Naive thymus-derived CD4-positive, alpha-beta T cell (primary cell): ENCODE measurements at regions of chr4 and their contacts with region 1.

Region 1: GRCh38 chr4:183261953-183262775 is 57.9 kb downstream of the CLDN22 start:
- DNase-seq: peak; percentile 41 to 72 (median 66)
- ATAC-seq: peak; percentile 95
- H3K4me3 ChIP-seq: no peak overlapping the region
- H3K4me3 Mint-ChIP-seq: no peak overlapping the region
- H3K27ac ChIP-seq: no peak overlapping the region
- H3K27ac Mint-ChIP-seq: peak overlapping the region in 8 of 9 donors; percentile 15 to 87 (median 78)
- H3K4me1 ChIP-seq: peaks cover 0 to 5% of the 10 kb centered on the region in 2 donors
- H3K4me1 Mint-ChIP-seq: peaks cover 3 to 12% (median 8%) of the 10 kb centered on the region in 7 donors
- H3K27me3 ChIP-seq: no peaks in the 10 kb centered on the region
- H3K27me3 Mint-ChIP-seq: peaks cover 0 to 4% (median 0%) of the 10 kb centered on the region in 5 donors

Region 2: DNA sequence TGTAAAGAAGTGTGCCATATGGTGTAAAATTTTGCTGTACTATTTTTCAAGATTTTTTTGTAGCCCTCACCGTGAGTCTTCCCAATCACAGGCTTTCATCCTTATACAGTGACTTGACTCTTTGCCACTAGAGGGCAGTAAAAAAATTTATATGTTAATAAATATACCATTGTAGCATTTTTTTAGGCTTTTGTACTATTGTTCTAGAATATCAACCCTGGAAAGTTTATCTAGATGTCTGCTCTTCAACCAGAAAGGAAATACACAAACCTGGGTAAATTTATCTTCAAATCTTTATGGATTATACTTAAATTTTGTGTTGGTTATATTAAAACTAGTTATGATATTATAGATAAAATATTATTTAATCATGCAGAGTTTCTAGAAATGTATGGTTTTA is 783.7 kb before region 1 on chr4:
- CTCF ChIA-PET with region 1: no interaction called
- POLR2A ChIA-PET with region 1: no interaction called
- intact Hi-C with region 1: loop called (anchors 1 kb)
- DNase-seq: peak in 6 of 9 donors; percentile 1 to 36 (median 22)
- ATAC-seq: peak; percentile 61
- H3K4me3 ChIP-seq: no peak overlapping the region
- H3K4me3 Mint-ChIP-seq: no peak overlapping the region
- H3K27ac ChIP-seq: no peak overlapping the region
- H3K27ac Mint-ChIP-seq: no peak overlapping the region
- H3K4me1 ChIP-seq: no peaks in the 10 kb centered on the region
- H3K4me1 Mint-ChIP-seq: no peaks in the 10 kb centered on the region
- H3K27me3 ChIP-seq: no peaks in the 10 kb centered on the region
- H3K27me3 Mint-ChIP-seq: peaks cover 0 to 16% (median 8%) of the 10 kb centered on the region in 5 donors

Region 3: DNA sequence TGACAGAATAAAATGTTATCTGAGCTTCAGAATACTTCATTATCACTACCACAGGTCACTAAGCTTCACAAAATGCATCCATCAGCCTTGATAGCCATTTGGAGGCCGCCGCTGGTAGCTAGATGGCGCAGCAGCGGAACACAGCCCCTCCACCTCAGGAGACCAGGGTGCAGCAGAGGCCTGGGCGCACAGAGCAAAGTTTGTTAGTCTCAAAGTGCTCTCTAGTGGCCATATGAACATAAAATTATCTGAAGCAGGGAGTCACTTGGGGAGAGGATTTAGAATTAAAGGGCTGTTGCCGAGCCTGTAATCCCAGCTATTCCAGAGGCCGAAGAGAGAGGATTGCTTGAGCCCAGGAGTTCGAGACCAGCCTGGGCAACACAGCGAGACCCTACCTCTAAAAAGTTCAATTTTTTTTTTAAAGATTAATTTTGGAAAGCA is 336.8 kb before region 1 on chr4:
- CTCF ChIA-PET with region 1: interaction called, 4 read pairs
- POLR2A ChIA-PET with region 1: no interaction called
- intact Hi-C with region 1: loop called in 1 of 2 experiments (anchors 1 kb)
- DNase-seq: peak; percentile 33 to 67 (median 52)
- ATAC-seq: peak; percentile 96
- H3K4me3 ChIP-seq: no peak overlapping the region
- H3K4me3 Mint-ChIP-seq: no peak overlapping the region
- H3K27ac ChIP-seq: no peak overlapping the region
- H3K27ac Mint-ChIP-seq: no peak overlapping the region
- H3K4me1 ChIP-seq: no peaks in the 10 kb centered on the region
- H3K4me1 Mint-ChIP-seq: peaks cover 0 to 8% (median 0%) of the 10 kb centered on the region in 7 donors
- H3K27me3 ChIP-seq: no peaks in the 10 kb centered on the region
- H3K27me3 Mint-ChIP-seq: peaks cover 0 to 36% (median 0%) of the 10 kb centered on the region in 5 donors

Region 4: DNA sequence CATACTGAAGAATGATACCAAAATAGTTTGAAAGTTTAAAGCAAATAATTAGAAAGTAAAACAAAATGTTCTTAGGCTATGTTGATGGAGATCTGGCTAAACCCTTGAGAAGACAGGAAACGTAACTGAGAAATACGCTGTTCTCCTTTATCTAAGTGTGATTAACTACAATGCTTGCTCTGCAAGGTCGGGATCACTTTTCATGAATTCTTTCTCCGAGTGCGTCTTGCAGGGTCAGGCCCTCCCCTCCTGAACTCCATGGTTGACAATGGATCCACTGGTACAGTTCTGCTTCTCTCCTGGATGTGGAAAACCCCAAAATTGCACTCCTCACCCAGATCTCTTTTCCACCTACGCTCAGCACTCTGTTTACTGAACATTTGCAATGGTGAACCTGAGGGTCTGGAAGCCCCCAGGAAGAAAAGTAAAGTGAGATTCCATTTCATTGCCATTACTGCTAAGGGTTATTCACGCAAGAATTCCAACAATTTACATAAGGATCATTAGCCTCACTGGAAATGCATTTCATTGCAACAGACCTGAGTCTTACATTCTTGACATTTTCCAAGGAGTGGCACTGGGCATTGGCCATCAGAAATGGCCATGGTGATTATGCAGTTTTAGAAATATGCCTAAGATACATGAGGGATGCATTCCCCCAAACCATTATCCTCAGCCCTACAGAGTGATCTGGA is 187.7 kb before region 1 on chr4:
- CTCF ChIA-PET with region 1: interaction called, 31 read pairs
- POLR2A ChIA-PET with region 1: no interaction called
- intact Hi-C with region 1: loop called (anchors 1 kb)
- DNase-seq: no peak
- ATAC-seq: no peak
- H3K4me3 ChIP-seq: no peak overlapping the region
- H3K4me3 Mint-ChIP-seq: no peak overlapping the region
- H3K27ac ChIP-seq: no peak overlapping the region
- H3K27ac Mint-ChIP-seq: peak overlapping the region in 1 of 9 donors; percentile 18
- H3K4me1 ChIP-seq: no peaks in the 10 kb centered on the region
- H3K4me1 Mint-ChIP-seq: no peaks in the 10 kb centered on the region
- H3K27me3 ChIP-seq: no peaks in the 10 kb centered on the region
- H3K27me3 Mint-ChIP-seq: peaks cover 0 to 16% (median 5%) of the 10 kb centered on the region in 5 donors

Region 5: GRCh38 chr4:183165376-183165775 is 96.8 kb before region 1 on chr4:
- CTCF ChIA-PET with region 1: no interaction called
- POLR2A ChIA-PET with region 1: no interaction called
- intact Hi-C with region 1: no loop called
- DNase-seq: no peak
- ATAC-seq: no peak
- H3K4me3 ChIP-seq: no peak overlapping the region
- H3K4me3 Mint-ChIP-seq: no peak overlapping the region
- H3K27ac ChIP-seq: no peak overlapping the region
- H3K27ac Mint-ChIP-seq: no peak overlapping the region
- H3K4me1 ChIP-seq: no peaks in the 10 kb centered on the region
- H3K4me1 Mint-ChIP-seq: peaks cover 0 to 28% (median 10%) of the 10 kb centered on the region in 7 donors
- H3K27me3 ChIP-seq: no peaks in the 10 kb centered on the region
- H3K27me3 Mint-ChIP-seq: peaks cover 0 to 4% (median 0%) of the 10 kb centered on the region in 5 donors

Region 6: GRCh38 chr4:183249857-183250256 is 12.3 kb before region 1 on chr4:
- CTCF ChIA-PET with region 1: interaction called, 24 read pairs
- POLR2A ChIA-PET with region 1: no interaction called
- intact Hi-C with region 1: no loop called
- DNase-seq: peak in 4 of 9 donors; percentile 3 to 19 (median 18)
- ATAC-seq: peak; percentile 47
- H3K4me3 ChIP-seq: no peak overlapping the region
- H3K4me3 Mint-ChIP-seq: no peak overlapping the region
- H3K27ac ChIP-seq: no peak overlapping the region
- H3K27ac Mint-ChIP-seq: no peak overlapping the region
- H3K4me1 ChIP-seq: no peaks in the 10 kb centered on the region
- H3K4me1 Mint-ChIP-seq: no peaks in the 10 kb centered on the region
- H3K27me3 ChIP-seq: no peaks in the 10 kb centered on the region
- H3K27me3 Mint-ChIP-seq: peaks cover 0 to 5% (median 0%) of the 10 kb centered on the region in 5 donors

Region 7: GRCh38 chr4:183407128-183407585 is 145.0 kb after region 1 on chr4:
- CTCF ChIA-PET with region 1: interaction called, 3 read pairs
- POLR2A ChIA-PET with region 1: no interaction called
- intact Hi-C with region 1: loop called in 1 of 2 experiments (anchors 1 kb)
- DNase-seq: peak; percentile 83 to 96 (median 90)
- ATAC-seq: peak; percentile 99
- H3K4me3 ChIP-seq: peak overlapping the region; percentile 78
- H3K4me3 Mint-ChIP-seq: peak overlapping the region; percentile 60 to 88 (median 85)
- H3K27ac ChIP-seq: peak overlapping the region; percentile 72
- H3K27ac Mint-ChIP-seq: peak overlapping the region; percentile 80 to 95 (median 87)
- H3K4me1 ChIP-seq: no peaks in the 10 kb centered on the region
- H3K4me1 Mint-ChIP-seq: peaks cover 5 to 30% (median 17%) of the 10 kb centered on the region in 7 donors
- H3K27me3 ChIP-seq: no peaks in the 10 kb centered on the region
- H3K27me3 Mint-ChIP-seq: peaks cover 0 to 11% (median 0%) of the 10 kb centered on the region in 5 donors

Region 8: DNA sequence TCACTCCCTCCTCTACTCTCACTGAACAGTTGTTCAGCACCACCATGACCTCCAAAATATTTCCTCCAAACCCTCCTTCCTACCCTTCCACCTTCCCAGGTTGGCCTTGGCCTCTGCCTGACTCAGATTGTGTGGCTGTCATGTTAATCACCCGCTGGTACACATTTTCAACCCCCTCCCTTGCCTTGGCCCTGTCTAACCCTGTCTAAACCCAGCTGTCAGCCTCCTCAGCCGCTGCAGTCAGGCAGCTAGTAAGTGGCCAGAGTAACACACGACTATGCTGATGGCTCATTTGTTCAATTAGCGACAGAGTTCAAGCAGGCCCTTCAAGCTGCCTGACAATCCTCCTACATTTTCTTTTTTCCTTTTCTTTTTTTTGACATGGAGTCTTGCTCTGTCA is 260.7 kb after region 1 on chr4:
- CTCF ChIA-PET with region 1: no interaction called
- POLR2A ChIA-PET with region 1: no interaction called
- intact Hi-C with region 1: no loop called
- DNase-seq: no peak
- ATAC-seq: no peak
- H3K4me3 ChIP-seq: no peak overlapping the region
- H3K4me3 Mint-ChIP-seq: no peak overlapping the region
- H3K27ac ChIP-seq: no peak overlapping the region
- H3K27ac Mint-ChIP-seq: no peak overlapping the region
- H3K4me1 ChIP-seq: no peaks in the 10 kb centered on the region
- H3K4me1 Mint-ChIP-seq: no peaks in the 10 kb centered on the region
- H3K27me3 ChIP-seq: no peaks in the 10 kb centered on the region
- H3K27me3 Mint-ChIP-seq: peaks cover 5 to 31% (median 18%) of the 10 kb centered on the region in 5 donors